ENCODE measurements at regions of chr19 and their contacts with region 1.

Region 1: DNA sequence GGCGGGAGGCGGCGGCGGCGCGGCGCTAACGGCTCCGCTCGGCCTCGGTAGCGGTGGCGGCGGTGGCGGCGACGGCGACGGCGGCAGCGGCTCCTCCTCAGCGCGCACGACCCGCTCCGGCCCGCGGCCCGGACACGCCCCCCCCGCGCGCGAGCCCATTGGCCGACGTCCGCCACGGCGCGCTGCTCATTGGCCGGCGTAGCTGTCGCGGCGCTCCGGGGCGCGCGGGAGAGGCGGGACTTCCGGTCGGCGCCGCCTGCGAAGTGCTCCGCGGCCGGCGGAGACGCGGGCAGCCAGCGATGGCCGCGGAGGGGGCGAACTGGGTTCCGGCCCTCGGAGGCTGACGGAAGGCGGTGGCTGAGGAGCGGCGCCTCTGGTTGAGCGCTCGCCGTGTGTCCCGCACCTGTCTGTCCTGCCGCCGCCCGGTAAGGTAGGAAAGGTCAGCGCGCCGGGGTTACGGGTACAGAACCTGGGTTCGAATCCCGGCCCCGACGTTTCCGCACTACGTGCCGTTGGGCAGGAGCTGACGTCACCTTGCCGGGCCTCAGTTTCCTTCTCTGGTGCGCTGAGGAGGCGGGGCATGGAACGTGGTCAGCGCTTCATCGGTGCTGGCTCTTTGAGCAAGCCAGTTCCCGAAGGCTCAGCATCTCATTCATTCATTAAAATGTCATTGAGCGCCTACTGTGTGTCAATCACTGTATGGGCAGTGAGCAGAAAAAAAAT is at the start of gene ELAVL1:
- DNase-seq: peak; percentile 74
- ATAC-seq: peak; percentile 81
- H3K4me3 ChIP-seq: peak within 1 kb of the TSS; percentile 87 to 100 (median 89)
- H3K27ac ChIP-seq: peak within 1 kb of the TSS; percentile 77
- H3K4me1 ChIP-seq: peaks cover 45% of the 10 kb centered on the region
- H3K27me3 ChIP-seq: no peaks in the 10 kb centered on the region
- CTCF ChIP-seq: no peak
- EP300 ChIP-seq: no peak
- POLR2A ChIP-seq: peak; percentile 82 to 87
- RAD21 ChIP-seq: peak; percentile 28; the same call in 1 of the 2 replicates
- total RNA-seq, gene ELAVL1: 38.4 and 58.2 TPM in 2 replicates

Region 2: DNA sequence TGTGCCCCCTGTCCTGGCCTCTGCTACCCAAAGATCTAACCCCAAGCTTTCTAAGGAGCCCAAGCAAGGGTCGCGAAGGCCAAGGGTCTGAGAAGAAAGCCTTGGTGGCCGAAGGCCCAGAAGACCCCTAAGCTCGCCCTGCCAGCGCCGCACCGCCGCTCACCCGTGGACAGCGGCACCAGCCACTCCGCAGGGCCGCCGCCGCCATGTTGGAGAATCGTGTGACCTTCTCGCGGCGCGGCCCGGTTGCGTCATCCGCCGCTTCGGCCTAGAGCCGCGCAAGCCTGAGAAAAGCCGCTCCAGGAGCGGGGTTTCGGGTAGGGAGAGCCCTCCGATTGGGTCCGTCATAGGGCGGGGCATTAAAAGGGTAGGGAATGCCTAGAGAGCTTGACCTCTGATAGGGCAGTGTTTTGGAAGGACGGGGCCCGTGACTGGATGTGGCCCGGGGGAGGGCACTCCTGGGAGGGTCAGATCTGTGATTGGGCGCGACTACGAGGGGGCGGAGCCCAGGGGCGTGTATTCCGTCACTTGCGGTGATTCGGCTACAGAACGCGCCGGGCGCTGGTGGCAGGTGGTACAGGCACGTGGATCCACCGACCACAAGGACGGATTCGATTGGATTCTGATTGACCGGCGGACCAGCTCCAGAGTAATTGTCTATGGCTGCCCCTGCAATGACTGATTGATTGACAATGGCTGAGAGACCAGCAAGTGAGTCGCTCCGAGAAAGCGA is 62.1 kb before region 1 on chr19 and contains the start of gene TIMM44:
- CTCF ChIA-PET with region 1: interaction called, 7 read pairs
- POLR2A ChIA-PET with region 1: interaction called, 19 read pairs
- in situ Hi-C with region 1: no loop called
- intact Hi-C with region 1: loop called (anchors 2 kb)
- DNase-seq: peak; percentile 99
- ATAC-seq: peak; percentile 98
- H3K4me3 ChIP-seq: peak within 1 kb of the TSS; percentile 65 to 98 (median 91)
- H3K27ac ChIP-seq: peak within 1 kb of the TSS; percentile 90
- H3K4me1 ChIP-seq: peaks cover 38% of the 10 kb centered on the region
- H3K27me3 ChIP-seq: peaks cover 0 to 3% of the 10 kb centered on the region in 2 experiments; a peak in 1 of 5 replicates
- CTCF ChIP-seq: no peak
- EP300 ChIP-seq: no peak
- POLR2A ChIP-seq: peak; percentile 98 to 99
- RAD21 ChIP-seq: peak; percentile 59
- total RNA-seq, gene TIMM44: 71.5 and 72.6 TPM in 2 replicates

Region 3: DNA sequence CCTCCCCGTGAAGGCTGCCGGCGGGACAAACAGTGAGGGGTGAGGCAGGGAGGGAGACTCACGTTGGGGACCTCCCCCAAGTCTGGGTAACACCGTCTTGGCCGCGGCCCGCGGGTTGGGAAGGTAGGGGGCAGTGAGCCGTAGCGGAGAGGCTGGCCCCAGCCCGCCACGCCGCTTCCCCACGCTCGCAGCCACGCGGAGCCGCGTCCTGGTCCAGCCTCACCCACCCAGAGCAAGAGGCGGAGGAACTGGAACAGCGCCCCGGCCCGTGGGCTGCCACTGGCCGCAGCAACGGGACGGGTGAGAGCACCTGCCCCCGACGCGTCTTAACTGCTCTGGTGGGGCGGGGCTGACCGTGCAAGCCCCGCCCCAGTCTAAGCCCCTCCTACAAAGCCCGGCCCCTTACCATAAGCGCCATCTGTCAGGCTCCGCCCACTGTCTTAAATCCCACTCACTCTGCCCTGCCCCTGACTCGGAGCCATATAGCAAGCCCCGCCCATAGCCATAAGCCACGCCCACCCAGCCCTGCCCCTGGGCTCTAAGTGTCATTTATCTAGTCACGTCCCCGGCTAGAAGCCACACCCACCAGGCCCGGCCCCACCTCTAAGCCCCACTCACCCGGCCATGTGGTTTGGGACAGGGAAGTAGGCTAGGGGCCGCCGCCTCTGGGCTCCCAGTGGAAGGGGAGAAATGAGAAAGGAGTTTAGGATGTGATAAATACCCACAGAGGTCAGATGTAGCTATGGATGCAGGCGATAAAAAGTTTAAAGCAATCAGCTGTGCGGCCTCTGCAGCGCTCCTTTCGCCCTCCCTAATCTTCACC is 44.8 kb after region 1 on chr19:
- CTCF ChIA-PET with region 1: no interaction called
- POLR2A ChIA-PET with region 1: no interaction called
- in situ Hi-C with region 1: no loop called
- intact Hi-C with region 1: no loop called
- DNase-seq: peak; percentile 81
- ATAC-seq: peak; percentile 79
- H3K4me3 ChIP-seq: peak overlapping the region; percentile 3 to 67 (median 41); a peak in 4 of 6 replicates
- H3K27ac ChIP-seq: no peak overlapping the region
- H3K4me1 ChIP-seq: peaks cover 24% of the 10 kb centered on the region
- H3K27me3 ChIP-seq: no peaks in the 10 kb centered on the region; a peak in 1 of 5 replicates
- CTCF ChIP-seq: 0 out of 2 replicates have a peak, but pooled peaks have one; percentile 16
- EP300 ChIP-seq: no peak
- POLR2A ChIP-seq: no peak
- RAD21 ChIP-seq: no peak

Region 4: DNA sequence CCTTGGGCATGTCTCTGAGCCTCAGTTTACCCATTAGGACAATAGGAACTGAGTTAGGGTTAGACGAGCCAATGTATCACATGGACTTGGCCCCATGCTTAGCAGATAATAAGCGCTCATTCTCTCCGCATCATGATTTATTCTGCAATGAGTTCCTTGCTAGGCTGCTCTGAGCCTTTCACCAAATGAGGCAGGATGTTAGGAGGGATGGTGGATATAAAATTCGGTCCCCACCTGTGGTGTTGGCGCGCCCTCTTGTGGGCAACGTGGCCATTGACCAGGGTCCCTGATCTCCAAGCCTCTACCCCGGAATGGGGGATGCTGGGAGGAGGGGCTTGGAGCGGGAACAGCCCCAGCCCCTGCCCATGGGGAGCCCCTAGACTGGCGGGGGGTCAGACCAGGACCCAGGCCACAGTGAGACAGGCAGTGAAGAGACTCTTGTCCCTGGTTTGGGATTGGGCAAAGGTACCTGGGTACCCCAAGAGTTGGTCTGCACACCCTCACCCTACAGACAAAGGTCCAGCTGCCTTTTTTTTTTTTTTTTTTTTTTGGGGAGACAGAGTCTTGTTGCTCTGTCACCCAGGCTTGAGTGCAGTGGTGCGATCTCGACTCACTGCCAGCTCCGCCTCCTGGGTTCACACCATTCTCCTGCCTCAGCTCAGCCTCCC is 247.4 kb after region 1 on chr19:
- CTCF ChIA-PET with region 1: no interaction called
- POLR2A ChIA-PET with region 1: no interaction called
- in situ Hi-C with region 1: loop called (anchors 25 kb)
- intact Hi-C with region 1: no loop called
- DNase-seq: peak; percentile 67
- ATAC-seq: peak; percentile 74
- H3K4me3 ChIP-seq: no peak overlapping the region
- H3K27ac ChIP-seq: no peak overlapping the region
- H3K4me1 ChIP-seq: peaks cover 29% of the 10 kb centered on the region
- H3K27me3 ChIP-seq: no peaks in the 10 kb centered on the region; a peak in 1 of 5 replicates
- CTCF ChIP-seq: peak; percentile 97
- EP300 ChIP-seq: no peak
- POLR2A ChIP-seq: 0 out of 4 replicates have a peak, but pooled peaks of 1 of the 2 experiments have one; percentile 21
- RAD21 ChIP-seq: peak; percentile 98

Measured in HepG2 (cell line).